ENCODE measurements at regions of chr12 and their contacts with region 1.

Region 1: DNA sequence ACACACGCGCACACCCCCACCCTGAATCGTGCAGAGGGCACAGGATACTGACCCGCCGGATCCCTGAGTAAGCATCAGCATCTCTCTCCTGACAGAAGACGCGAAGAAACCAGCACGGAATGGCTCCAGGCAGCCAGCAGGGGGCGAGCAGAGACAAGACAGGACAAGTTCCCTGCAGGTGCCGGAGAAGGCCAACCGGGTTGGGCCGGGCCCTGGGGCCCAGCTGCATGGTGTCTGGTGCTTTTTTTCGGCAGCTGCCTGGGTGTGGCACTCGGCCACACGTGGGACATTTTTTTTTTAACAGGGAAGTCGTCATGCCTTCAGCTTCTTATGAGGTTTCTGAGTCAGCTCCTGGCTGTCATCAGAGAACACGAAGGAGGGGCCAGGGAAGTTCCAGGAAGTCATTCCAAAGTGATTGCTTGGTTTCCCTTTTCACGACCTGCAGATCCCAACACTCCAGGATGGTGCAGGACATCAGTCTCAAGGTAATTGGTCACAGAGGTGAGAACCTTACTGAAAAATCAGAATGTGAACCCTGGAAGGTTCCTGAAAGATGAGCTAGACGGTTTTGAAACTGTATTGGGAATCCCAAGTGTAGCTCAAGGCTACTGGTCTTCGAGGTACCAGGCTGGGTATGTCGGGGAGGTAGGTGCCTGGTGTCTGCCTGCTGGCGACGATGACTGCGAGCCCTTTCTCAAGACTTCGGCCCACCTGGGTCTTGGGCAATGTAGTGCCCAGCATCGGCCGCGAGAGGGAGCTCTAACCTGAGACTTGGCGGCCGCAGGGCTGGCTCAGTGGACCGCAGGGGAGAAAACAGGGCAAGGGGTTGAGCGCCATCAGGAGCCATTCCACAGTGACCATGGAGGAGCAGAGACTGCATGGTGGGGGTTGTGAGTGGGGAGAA is 190.8 kb upstream of the PRMT8 start:
- DNase-seq: peak; percentile 94
- H3K4me3 ChIP-seq: peak overlapping the region; percentile 17
- H3K4me3 Mint-ChIP-seq: peak overlapping the region; percentile 62
- H3K27ac Mint-ChIP-seq: peak overlapping the region; percentile 55
- H3K4me1 ChIP-seq: no peaks in the 10 kb centered on the region
- H3K4me1 Mint-ChIP-seq: peaks cover 7% of the 10 kb centered on the region
- H3K27me3 ChIP-seq: peaks cover 2% of the 10 kb centered on the region
- H3K27me3 Mint-ChIP-seq: peaks cover 18% of the 10 kb centered on the region
- CTCF ChIP-seq: peak; percentile 99

Region 2: DNA sequence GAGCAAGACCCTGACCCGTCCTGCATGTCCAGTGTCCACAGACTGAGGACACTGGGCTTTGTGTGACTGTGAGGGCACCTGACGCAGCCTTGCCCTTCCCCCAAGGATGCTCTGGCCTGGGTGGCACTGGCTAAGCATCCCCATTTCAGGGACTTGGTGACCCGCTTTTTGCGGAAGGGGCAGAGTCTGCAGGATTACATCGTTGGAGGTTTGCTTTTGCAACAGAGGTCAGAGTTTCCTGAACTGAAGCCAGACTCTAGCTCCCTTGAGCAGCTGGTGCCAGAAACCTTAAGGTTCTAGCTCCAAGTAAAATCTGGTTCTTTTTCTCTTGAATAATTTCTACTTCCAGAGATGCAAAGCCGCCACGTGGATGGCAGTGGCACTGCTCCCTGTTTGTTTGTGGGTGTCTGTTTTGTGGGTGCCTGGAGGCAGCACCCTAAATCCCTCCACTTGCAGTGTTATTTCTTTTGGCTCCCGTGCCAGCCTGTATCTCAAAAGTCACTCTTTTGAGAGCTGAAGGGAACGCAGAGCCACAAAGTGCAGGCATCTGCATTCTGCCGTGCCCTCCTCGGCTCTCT is 38.3 kb before region 1 on chr12:
- CTCF ChIA-PET with region 1: no interaction called
- POLR2A ChIA-PET with region 1: no interaction called
- intact Hi-C with region 1: no loop called
- DNase-seq: no peak
- H3K4me3 ChIP-seq: no peak overlapping the region
- H3K4me3 Mint-ChIP-seq: no peak overlapping the region
- H3K27ac Mint-ChIP-seq: no peak overlapping the region
- H3K4me1 ChIP-seq: no peaks in the 10 kb centered on the region
- H3K4me1 Mint-ChIP-seq: no peaks in the 10 kb centered on the region
- H3K27me3 ChIP-seq: no peaks in the 10 kb centered on the region
- H3K27me3 Mint-ChIP-seq: no peaks in the 10 kb centered on the region
- CTCF ChIP-seq: no peak

Region 3: GRCh38 chr12:3313675-3314663 is 13.8 kb after region 1 on chr12:
- CTCF ChIA-PET with region 1: interaction called, 85 read pairs
- POLR2A ChIA-PET with region 1: no interaction called
- intact Hi-C with region 1: no loop called
- DNase-seq: peak in 1 of 2 experiments; percentile 66
- H3K4me3 ChIP-seq: no peak overlapping the region
- H3K4me3 Mint-ChIP-seq: no peak overlapping the region
- H3K27ac Mint-ChIP-seq: no peak overlapping the region
- H3K4me1 ChIP-seq: peaks cover 17% of the 10 kb centered on the region
- H3K4me1 Mint-ChIP-seq: peaks cover 20% of the 10 kb centered on the region
- H3K27me3 ChIP-seq: no peaks in the 10 kb centered on the region
- H3K27me3 Mint-ChIP-seq: peaks cover 13% of the 10 kb centered on the region
- CTCF ChIP-seq: peak in 1 of 2 experiments; percentile 78

Region 4: GRCh38 chr12:3342056-3342455 is 41.9 kb after region 1 on chr12:
- CTCF ChIA-PET with region 1: interaction called, 14 read pairs
- POLR2A ChIA-PET with region 1: no interaction called
- intact Hi-C with region 1: no loop called
- DNase-seq: peak; percentile 61
- H3K4me3 ChIP-seq: no peak overlapping the region
- H3K4me3 Mint-ChIP-seq: no peak overlapping the region
- H3K27ac Mint-ChIP-seq: no peak overlapping the region
- H3K4me1 ChIP-seq: no peaks in the 10 kb centered on the region
- H3K4me1 Mint-ChIP-seq: no peaks in the 10 kb centered on the region
- H3K27me3 ChIP-seq: 0 out of 2 replicates have a peak, but pooled peaks cover 1% of the 10 kb centered on the region
- H3K27me3 Mint-ChIP-seq: peaks cover 23% of the 10 kb centered on the region
- CTCF ChIP-seq: peak; percentile 54 to 75

Region 5: DNA sequence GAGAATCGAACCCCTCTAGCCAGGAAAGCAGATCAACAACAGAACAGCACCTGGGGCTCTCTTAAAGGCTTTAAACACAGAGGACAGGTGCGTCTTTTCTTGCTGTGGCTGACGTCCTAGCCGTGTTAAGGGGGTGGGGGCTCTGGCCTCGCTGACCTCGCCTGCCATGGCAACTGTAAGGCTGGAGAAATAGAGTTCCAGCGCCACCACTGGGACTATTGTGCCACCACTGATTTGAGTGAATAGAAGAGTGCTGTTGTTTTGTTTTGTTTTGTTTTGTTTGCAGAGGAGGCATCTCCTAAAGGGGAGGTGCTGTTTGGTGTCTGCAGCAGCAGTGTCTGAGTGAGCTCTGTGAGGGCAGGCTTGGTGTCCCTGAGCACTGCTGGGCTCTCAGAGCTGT is 156.6 kb after region 1 on chr12:
- CTCF ChIA-PET with region 1: interaction called, 7 read pairs
- POLR2A ChIA-PET with region 1: no interaction called
- intact Hi-C with region 1: loop called (anchors 5 kb)
- DNase-seq: peak in 1 of 2 experiments; percentile 23
- H3K4me3 ChIP-seq: no peak overlapping the region
- H3K4me3 Mint-ChIP-seq: no peak overlapping the region
- H3K27ac Mint-ChIP-seq: no peak overlapping the region
- H3K4me1 ChIP-seq: no peaks in the 10 kb centered on the region
- H3K4me1 Mint-ChIP-seq: no peaks in the 10 kb centered on the region
- H3K27me3 ChIP-seq: no peaks in the 10 kb centered on the region; the same call in 1 of the 2 replicates
- H3K27me3 Mint-ChIP-seq: peaks cover 26% of the 10 kb centered on the region
- CTCF ChIP-seq: peak in 1 of 2 experiments; percentile 10

Region 6: DNA sequence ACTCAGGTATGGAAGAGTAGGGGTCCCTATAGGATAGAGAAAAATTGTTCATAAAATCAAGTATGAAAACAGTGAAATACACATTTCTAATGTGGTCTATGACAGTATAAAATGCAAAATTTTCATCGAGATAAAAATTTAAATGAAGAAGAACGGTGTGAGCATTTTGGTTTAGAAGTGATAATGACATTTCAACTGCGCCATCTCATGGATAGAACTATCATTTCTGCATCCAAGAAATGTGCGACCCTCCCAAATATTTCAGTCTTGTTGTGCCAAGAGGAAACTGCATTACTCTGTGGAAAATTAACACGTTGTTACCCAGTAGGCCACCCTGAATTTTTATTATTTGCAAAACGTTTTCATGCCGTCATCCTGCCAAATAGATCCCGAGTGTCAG is 343.9 kb after region 1 on chr12:
- CTCF ChIA-PET with region 1: no interaction called
- POLR2A ChIA-PET with region 1: no interaction called
- intact Hi-C with region 1: loop called (anchors 2 kb)
- DNase-seq: no peak
- H3K4me3 ChIP-seq: no peak overlapping the region
- H3K4me3 Mint-ChIP-seq: no peak overlapping the region
- H3K27ac Mint-ChIP-seq: no peak overlapping the region
- H3K4me1 ChIP-seq: no peaks in the 10 kb centered on the region; the same call in 1 of the 2 replicates
- H3K4me1 Mint-ChIP-seq: peaks cover 6% of the 10 kb centered on the region
- H3K27me3 ChIP-seq: no peaks in the 10 kb centered on the region
- H3K27me3 Mint-ChIP-seq: no peaks in the 10 kb centered on the region
- CTCF ChIP-seq: no peak

Region 7: GRCh38 chr12:3680896-3681594 is 380.9 kb after region 1 on chr12:
- CTCF ChIA-PET with region 1: interaction called, 12 read pairs
- POLR2A ChIA-PET with region 1: no interaction called
- intact Hi-C with region 1: no loop called
- DNase-seq: no peak
- H3K4me3 ChIP-seq: no peak overlapping the region
- H3K4me3 Mint-ChIP-seq: no peak overlapping the region
- H3K27ac Mint-ChIP-seq: no peak overlapping the region
- H3K4me1 ChIP-seq: no peaks in the 10 kb centered on the region
- H3K4me1 Mint-ChIP-seq: no peaks in the 10 kb centered on the region
- H3K27me3 ChIP-seq: no peaks in the 10 kb centered on the region
- H3K27me3 Mint-ChIP-seq: no peaks in the 10 kb centered on the region
- CTCF ChIP-seq: peak; percentile 29 to 33

Region 8: GRCh38 chr12:3803865-3804472 is 503.8 kb after region 1 on chr12:
- CTCF ChIA-PET with region 1: interaction called, 55 read pairs
- POLR2A ChIA-PET with region 1: no interaction called
- intact Hi-C with region 1: loop called (anchors 1 kb)
- DNase-seq: peak; percentile 80
- H3K4me3 ChIP-seq: no peak overlapping the region
- H3K4me3 Mint-ChIP-seq: no peak overlapping the region
- H3K27ac Mint-ChIP-seq: no peak overlapping the region
- H3K4me1 ChIP-seq: no peaks in the 10 kb centered on the region
- H3K4me1 Mint-ChIP-seq: no peaks in the 10 kb centered on the region
- H3K27me3 ChIP-seq: no peaks in the 10 kb centered on the region
- H3K27me3 Mint-ChIP-seq: no peaks in the 10 kb centered on the region
- CTCF ChIP-seq: peak; percentile 95 to 98

Measured in Caco-2 (cell line).